ENCODE measurements at regions of chr16 and their contacts with region 1.

Region 1: GRCh38 chr16:63684149-63685101 is 1437.4 kb downstream of the CDH11 start:
- DNase-seq: no peak
- ATAC-seq: no peak

Region 2: DNA sequence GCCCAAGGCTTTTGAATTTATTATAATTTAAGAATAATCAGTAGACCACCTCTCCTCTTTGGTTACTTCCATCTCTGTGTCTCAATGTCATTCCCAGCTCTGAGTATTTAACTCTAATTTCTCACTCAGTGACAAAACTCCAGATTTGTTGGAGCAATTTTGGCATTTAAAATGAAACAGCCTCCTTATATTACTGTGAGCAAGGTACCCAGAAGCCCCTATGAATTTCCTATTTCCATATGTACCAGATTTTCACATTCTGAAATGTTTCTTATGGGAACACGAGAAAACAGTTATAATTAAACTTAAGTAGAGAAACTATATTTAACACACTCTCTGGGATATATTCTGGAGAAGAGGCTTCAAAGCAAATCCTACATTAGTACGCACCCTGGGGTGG is 1362.8 kb before region 1 on chr16:
- intact Hi-C with region 1: loop called (anchors 5 kb)
- DNase-seq: no peak
- ATAC-seq: no peak